Naive thymus-derived CD4-positive, alpha-beta T cell (primary cell): ENCODE measurements at regions of chr9 and their contacts with region 1.

Region 1: GRCh38 chr9:72526901-72527800 is 5.7 kb downstream of the TMC1 start:
- DNase-seq: peak; percentile 24 to 81 (median 63)
- ATAC-seq: peak; percentile 90
- H3K4me3 ChIP-seq: peak overlapping the region; percentile 28
- H3K4me3 Mint-ChIP-seq: peak overlapping the region; percentile 83 to 94 (median 88)
- H3K27ac ChIP-seq: peak overlapping the region; percentile 65
- H3K27ac Mint-ChIP-seq: peak overlapping the region; percentile 85 to 98 (median 92)
- H3K4me1 ChIP-seq: peaks cover 13 to 15% of the 10 kb centered on the region in 2 donors
- H3K4me1 Mint-ChIP-seq: peaks cover 11 to 56% (median 28%) of the 10 kb centered on the region in 7 donors
- H3K27me3 ChIP-seq: no peaks in the 10 kb centered on the region
- H3K27me3 Mint-ChIP-seq: no peaks in the 10 kb centered on the region

Region 2: GRCh38 chr9:71795097-71795813 is 731.9 kb before region 1 on chr9:
- CTCF ChIA-PET with region 1: no interaction called
- POLR2A ChIA-PET with region 1: interaction called, 5 read pairs
- intact Hi-C with region 1: loop called in 1 of 2 experiments (anchors 2 kb)
- DNase-seq: peak in 7 of 9 donors; percentile 68 to 90 (median 85)
- ATAC-seq: peak; percentile 92
- H3K4me3 ChIP-seq: peak overlapping the region; percentile 17
- H3K4me3 Mint-ChIP-seq: peak overlapping the region; percentile 26 to 90 (median 76)
- H3K27ac ChIP-seq: peak overlapping the region; percentile 71
- H3K27ac Mint-ChIP-seq: peak overlapping the region; percentile 91 to 99 (median 96)
- H3K4me1 ChIP-seq: peaks cover 36 to 63% of the 10 kb centered on the region in 2 donors
- H3K4me1 Mint-ChIP-seq: peaks cover 44 to 87% (median 76%) of the 10 kb centered on the region in 7 donors
- H3K27me3 ChIP-seq: no peaks in the 10 kb centered on the region
- H3K27me3 Mint-ChIP-seq: no peaks in the 10 kb centered on the region

Region 3: DNA sequence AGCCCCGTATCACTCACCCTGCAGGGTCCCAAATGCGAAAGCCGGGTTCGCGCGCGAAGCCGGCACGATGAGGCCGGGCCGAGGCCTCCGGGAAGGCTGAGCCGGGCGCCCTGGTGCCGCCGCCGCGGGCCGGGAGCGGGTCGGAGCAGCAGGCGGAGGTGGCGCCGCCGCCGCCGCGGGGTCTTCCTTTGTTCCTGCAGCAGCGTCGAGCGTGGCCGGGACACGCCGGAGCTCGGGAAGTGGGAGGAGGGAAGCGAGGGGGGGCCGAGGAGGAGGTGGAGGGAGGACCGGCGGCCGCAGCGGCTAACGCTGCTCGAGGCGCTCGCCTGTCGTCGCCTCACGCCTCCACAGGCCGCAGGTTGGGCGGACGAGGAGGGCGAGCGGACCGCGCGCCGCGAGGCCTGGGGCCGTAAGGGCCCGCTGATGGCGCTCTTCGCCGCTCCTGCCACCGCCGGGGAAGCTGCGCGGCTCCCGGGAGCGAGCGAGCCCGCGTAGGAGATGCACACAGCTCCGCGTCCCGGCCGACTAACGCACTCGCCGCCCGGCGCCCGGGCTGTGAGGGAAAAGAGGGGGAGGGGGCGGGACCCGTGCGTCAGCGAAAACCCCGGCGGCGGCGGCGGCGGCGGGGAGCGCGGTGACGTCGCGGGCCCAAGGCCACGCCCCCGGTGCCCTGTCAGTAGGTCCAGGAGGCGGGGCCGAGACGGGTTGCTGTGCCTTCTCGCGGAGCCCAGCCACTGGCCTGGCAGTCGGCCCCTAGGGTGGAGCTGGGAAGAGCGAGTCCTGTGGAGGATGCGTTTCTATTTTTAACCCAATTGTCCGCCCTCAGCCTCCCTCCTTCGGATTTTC is 162.2 kb before region 1 on chr9 and contains the start of gene ZFAND5:
- CTCF ChIA-PET with region 1: interaction called, 7 read pairs
- POLR2A ChIA-PET with region 1: interaction called, 15 read pairs
- intact Hi-C with region 1: loop called (anchors 1 kb)
- DNase-seq: peak; percentile 88 to 93 (median 90)
- ATAC-seq: peak; percentile 90
- H3K4me3 ChIP-seq: peak within 1 kb of the TSS; percentile 89
- H3K4me3 Mint-ChIP-seq: peak within 1 kb of the TSS; percentile 91 to 99 (median 96)
- H3K27ac ChIP-seq: peak within 1 kb of the TSS; percentile 94
- H3K27ac Mint-ChIP-seq: peak within 1 kb of the TSS; percentile 97 to 99 (median 99)
- H3K4me1 ChIP-seq: peaks cover 24 to 30% of the 10 kb centered on the region in 2 donors
- H3K4me1 Mint-ChIP-seq: peaks cover 16 to 47% (median 44%) of the 10 kb centered on the region in 7 donors
- H3K27me3 ChIP-seq: no peaks in the 10 kb centered on the region
- H3K27me3 Mint-ChIP-seq: no peaks in the 10 kb centered on the region
- total RNA-seq, gene ZFAND5: 82.4 to 466 (median 155) TPM

Region 4: GRCh38 chr9:72473474-72474261 is 53.5 kb before region 1 on chr9:
- CTCF ChIA-PET with region 1: no interaction called
- POLR2A ChIA-PET with region 1: interaction called, 4 read pairs
- intact Hi-C with region 1: loop called (anchors 1 kb)
- DNase-seq: no peak
- ATAC-seq: peak; percentile 62
- H3K4me3 ChIP-seq: no peak overlapping the region
- H3K4me3 Mint-ChIP-seq: peak overlapping the region in 1 of 10 donors; percentile 62
- H3K27ac ChIP-seq: no peak overlapping the region
- H3K27ac Mint-ChIP-seq: peak overlapping the region in 4 of 9 donors; percentile 63 to 88 (median 78)
- H3K4me1 ChIP-seq: peaks cover 0 to 6% of the 10 kb centered on the region in 2 donors
- H3K4me1 Mint-ChIP-seq: peaks cover 8 to 47% (median 13%) of the 10 kb centered on the region in 7 donors
- H3K27me3 ChIP-seq: no peaks in the 10 kb centered on the region
- H3K27me3 Mint-ChIP-seq: peaks cover 0 to 4% (median 0%) of the 10 kb centered on the region in 5 donors

Region 5: DNA sequence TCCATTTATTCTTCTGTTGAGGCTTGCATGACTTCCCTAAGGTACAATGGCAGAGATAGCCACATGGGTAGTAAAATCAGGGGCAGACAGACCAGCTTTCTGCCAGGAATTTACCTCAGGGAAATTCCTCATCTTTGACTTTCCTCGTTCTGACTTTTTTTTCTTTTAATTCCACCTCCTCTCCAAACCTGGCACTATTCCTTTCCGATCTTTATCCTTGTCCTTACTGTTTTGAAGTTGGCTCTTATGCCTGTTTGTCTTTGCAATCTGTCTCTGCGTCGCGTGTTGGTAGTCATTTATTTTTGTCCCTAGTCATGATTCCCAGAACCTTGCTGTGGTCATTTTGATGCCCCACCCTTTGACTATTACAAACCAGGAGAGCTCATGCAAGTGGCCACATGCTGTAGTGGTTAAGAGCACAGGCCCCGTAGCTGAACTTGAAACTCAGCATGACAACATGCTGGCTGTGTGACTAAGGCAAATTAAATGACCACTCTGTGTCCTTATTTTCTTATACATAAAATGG is 13.3 kb after region 1 on chr9:
- CTCF ChIA-PET with region 1: no interaction called
- POLR2A ChIA-PET with region 1: interaction called, 3 read pairs
- intact Hi-C with region 1: loop called in 1 of 2 experiments (anchors 1 kb)
- DNase-seq: no peak
- ATAC-seq: no peak
- H3K4me3 ChIP-seq: no peak overlapping the region
- H3K4me3 Mint-ChIP-seq: no peak overlapping the region
- H3K27ac ChIP-seq: no peak overlapping the region
- H3K27ac Mint-ChIP-seq: no peak overlapping the region
- H3K4me1 ChIP-seq: no peaks in the 10 kb centered on the region
- H3K4me1 Mint-ChIP-seq: peaks cover 0 to 31% (median 0%) of the 10 kb centered on the region in 7 donors
- H3K27me3 ChIP-seq: no peaks in the 10 kb centered on the region
- H3K27me3 Mint-ChIP-seq: no peaks in the 10 kb centered on the region

Region 6: DNA sequence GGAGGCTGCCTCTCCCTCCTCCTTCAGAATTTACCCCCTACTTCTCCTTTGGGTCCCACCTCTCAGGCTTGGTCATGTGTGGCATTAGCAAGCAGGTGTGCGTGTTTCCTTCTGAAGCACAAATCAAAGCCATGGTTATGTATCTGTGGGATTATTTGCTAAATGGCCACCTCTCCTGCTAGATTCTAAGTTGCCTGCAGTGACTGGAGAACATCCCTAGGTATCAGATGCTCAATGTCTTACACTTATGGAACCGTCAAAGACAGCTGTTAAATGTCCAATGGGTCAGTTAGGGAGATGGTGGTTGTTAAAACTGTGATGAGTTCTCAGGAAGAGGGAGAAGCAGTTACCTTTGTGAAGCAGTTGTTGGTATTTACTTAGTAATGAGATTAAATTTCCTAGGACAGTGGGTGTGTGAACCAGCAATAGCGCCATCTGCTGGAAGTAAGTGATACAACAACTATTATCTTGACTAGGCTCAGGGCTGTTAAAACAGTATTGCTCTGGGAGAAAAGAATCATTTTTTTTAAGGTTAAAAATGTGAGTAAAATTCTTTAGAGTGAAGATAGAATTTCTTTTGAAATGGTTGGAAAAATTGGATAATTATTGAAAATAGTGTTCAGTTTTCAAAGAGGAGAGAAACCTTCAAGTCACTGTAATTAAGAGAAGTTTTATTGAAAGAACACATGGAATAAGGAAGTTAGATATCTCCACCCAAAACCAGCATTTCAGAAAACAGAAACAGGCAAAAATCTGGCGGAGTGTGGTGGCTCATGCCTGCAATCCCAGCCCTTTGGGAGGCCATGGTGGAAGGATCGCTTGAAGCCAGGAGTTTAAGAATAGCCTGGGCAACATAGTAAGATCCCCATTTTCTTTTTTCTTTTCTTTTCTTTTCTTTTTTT is 65.6 kb after region 1 on chr9:
- CTCF ChIA-PET with region 1: no interaction called
- POLR2A ChIA-PET with region 1: no interaction called
- intact Hi-C with region 1: loop called (anchors 1 to 5 kb)
- DNase-seq: peak in 7 of 9 donors; percentile 11 to 60 (median 47)
- ATAC-seq: peak; percentile 80
- H3K4me3 ChIP-seq: no peak overlapping the region
- H3K4me3 Mint-ChIP-seq: no peak overlapping the region
- H3K27ac ChIP-seq: no peak overlapping the region
- H3K27ac Mint-ChIP-seq: no peak overlapping the region
- H3K4me1 ChIP-seq: no peaks in the 10 kb centered on the region
- H3K4me1 Mint-ChIP-seq: peaks cover 0 to 50% (median 6%) of the 10 kb centered on the region in 7 donors
- H3K27me3 ChIP-seq: no peaks in the 10 kb centered on the region
- H3K27me3 Mint-ChIP-seq: peaks cover 0 to 5% (median 2%) of the 10 kb centered on the region in 5 donors